PC-9 (cell line): ENCODE measurements at regions of chr14 and their contacts with region 1.

Region 1: GRCh38 chr14:54488646-54489317 is at the start of gene GMFB:
- DNase-seq: peak; percentile 85 to 94
- H3K4me3 ChIP-seq: peak within 1 kb of the TSS; percentile 80
- H3K27ac ChIP-seq: peak within 1 kb of the TSS; percentile 95
- H3K4me1 ChIP-seq: peaks cover 30% of the 10 kb centered on the region
- H3K27me3 ChIP-seq: no peaks in the 10 kb centered on the region
- CTCF ChIP-seq: no peak
- total RNA-seq, gene GMFB: 32.2 and 35.5 TPM in 2 replicates

Region 2: DNA sequence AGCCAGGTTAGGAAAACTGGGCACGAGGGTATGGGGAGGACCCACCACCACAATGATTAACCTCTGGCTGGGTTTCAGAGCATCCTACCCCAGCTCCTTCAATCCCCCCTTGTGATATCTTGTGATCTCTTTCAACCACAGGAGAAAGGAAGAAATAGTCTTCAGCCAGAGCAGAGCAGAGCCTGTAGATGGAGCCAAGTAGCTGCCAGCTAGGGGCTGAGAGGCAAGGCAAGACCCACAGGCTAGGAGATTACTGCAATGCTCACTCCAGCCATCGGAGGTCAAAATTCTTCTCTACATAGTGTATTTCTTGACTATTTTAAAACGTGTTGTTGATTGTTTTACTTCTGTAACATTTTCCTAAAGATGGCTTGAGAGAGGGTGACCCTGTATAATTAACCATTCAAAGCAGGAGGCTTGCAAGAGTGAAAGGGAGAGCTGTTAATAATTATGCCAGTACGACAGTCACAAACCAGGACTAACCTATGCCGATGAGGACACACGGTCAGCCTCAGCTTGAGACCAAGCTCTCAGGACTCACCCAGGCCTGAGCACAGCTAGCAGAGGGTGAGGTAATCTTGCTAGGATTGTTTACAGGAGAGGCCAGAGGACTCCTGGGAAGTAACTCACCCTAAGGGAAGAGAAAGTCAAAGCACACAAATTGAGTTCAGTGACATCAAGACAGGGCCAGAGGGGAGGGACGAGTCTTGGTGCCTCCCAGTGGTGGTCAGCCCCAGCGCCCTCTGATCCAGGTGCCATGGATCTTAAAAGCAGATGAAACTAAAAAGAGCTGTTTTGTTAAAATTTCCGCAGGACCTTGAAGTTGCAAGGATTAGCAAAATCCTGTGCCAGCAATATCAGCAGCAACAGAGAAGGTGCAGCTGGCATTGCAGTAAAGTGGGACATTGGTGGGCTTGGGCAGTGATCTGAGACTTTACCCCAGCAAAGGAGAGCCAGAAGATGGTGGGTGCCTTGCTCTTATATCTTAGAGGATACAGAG is 121.7 kb before region 1 on chr14:
- CTCF ChIA-PET with region 1: no interaction called
- POLR2A ChIA-PET with region 1: no interaction called
- intact Hi-C with region 1: loop called (anchors 5 kb)
- DNase-seq: peak; percentile 49 to 55
- H3K4me3 ChIP-seq: no peak overlapping the region
- H3K27ac ChIP-seq: no peak overlapping the region
- H3K4me1 ChIP-seq: 0 out of 2 replicates have a peak, but pooled peaks cover 7% of the 10 kb centered on the region
- H3K27me3 ChIP-seq: no peaks in the 10 kb centered on the region
- CTCF ChIP-seq: peak; percentile 54

Region 3: DNA sequence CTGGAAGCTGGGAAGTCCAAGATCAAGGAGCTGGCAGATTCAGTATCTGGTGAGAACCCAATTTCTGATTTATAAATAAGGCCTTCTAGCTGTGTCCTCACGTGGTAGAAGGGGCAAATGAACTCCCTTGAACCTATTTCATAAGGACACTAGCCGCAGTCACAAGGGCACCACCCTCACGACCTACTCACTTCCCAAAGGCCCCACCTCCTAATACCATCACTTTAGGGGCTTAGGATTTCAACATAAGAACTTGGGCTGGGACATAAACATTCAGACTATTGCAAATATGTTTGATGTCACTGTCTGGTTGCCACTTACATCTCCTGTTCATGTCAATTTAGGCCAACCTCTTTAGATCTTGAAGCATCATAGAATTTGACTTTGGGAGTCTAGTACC is 36.8 kb before region 1 on chr14:
- CTCF ChIA-PET with region 1: no interaction called
- POLR2A ChIA-PET with region 1: interaction called, 16 read pairs
- intact Hi-C with region 1: no loop called
- DNase-seq: no peak
- H3K4me3 ChIP-seq: no peak overlapping the region
- H3K27ac ChIP-seq: no peak overlapping the region
- H3K4me1 ChIP-seq: peaks cover 10% of the 10 kb centered on the region
- H3K27me3 ChIP-seq: no peaks in the 10 kb centered on the region
- CTCF ChIP-seq: no peak

Region 4: DNA sequence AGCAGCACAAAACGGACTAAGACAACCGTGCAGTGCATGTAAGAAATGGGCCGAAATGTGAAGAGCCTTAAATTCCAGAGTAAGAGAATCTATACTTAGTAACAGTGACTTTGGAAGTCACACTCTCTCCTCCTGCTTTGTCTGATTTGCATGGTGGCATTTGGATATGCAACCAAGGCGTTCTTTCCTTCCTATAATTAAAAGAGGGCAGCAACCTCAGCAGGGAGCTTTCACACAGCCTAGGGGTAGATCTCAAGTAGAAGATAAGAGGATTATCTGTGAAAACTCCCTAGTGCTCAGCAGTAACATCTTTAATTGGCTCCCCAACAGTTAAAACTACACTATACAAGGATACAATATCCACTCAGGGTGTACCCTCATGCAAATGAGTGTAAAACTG is 16.5 kb before region 1 on chr14:
- CTCF ChIA-PET with region 1: no interaction called
- POLR2A ChIA-PET with region 1: no interaction called
- intact Hi-C with region 1: no loop called
- DNase-seq: no peak
- H3K4me3 ChIP-seq: no peak overlapping the region
- H3K27ac ChIP-seq: no peak overlapping the region
- H3K4me1 ChIP-seq: no peaks in the 10 kb centered on the region
- H3K27me3 ChIP-seq: no peaks in the 10 kb centered on the region
- CTCF ChIP-seq: no peak

Region 5: GRCh38 chr14:54509546-54510501 is 21.0 kb after region 1 on chr14 and contains the start of gene CGRRF1:
- CTCF ChIA-PET with region 1: interaction called, 6 read pairs
- POLR2A ChIA-PET with region 1: interaction called, 6 read pairs
- intact Hi-C with region 1: loop called (anchors 2 kb)
- DNase-seq: peak; percentile 92 to 98
- H3K4me3 ChIP-seq: peak within 1 kb of the TSS; percentile 79
- H3K27ac ChIP-seq: no peak within 1 kb of the TSS
- H3K4me1 ChIP-seq: peaks cover 9% of the 10 kb centered on the region
- H3K27me3 ChIP-seq: no peaks in the 10 kb centered on the region
- CTCF ChIP-seq: peak; percentile 79
- total RNA-seq, gene CGRRF1: 10.3 and 11.3 TPM in 2 replicates

Region 6: GRCh38 chr14:54818201-54819133 is 329.7 kb after region 1 on chr14:
- CTCF ChIA-PET with region 1: no interaction called
- POLR2A ChIA-PET with region 1: interaction called, 26 read pairs
- intact Hi-C with region 1: no loop called
- DNase-seq: peak; percentile 49 to 75
- H3K4me3 ChIP-seq: no peak overlapping the region; the same call in 1 of the 2 replicates
- H3K27ac ChIP-seq: no peak overlapping the region
- H3K4me1 ChIP-seq: peaks cover 11% of the 10 kb centered on the region
- H3K27me3 ChIP-seq: no peaks in the 10 kb centered on the region
- CTCF ChIP-seq: no peak